Right ventricle myocardium inferior (tissue), 1 donor: ENCODE measurements at regions of chr1 and their contacts with region 1.

Region 1: DNA sequence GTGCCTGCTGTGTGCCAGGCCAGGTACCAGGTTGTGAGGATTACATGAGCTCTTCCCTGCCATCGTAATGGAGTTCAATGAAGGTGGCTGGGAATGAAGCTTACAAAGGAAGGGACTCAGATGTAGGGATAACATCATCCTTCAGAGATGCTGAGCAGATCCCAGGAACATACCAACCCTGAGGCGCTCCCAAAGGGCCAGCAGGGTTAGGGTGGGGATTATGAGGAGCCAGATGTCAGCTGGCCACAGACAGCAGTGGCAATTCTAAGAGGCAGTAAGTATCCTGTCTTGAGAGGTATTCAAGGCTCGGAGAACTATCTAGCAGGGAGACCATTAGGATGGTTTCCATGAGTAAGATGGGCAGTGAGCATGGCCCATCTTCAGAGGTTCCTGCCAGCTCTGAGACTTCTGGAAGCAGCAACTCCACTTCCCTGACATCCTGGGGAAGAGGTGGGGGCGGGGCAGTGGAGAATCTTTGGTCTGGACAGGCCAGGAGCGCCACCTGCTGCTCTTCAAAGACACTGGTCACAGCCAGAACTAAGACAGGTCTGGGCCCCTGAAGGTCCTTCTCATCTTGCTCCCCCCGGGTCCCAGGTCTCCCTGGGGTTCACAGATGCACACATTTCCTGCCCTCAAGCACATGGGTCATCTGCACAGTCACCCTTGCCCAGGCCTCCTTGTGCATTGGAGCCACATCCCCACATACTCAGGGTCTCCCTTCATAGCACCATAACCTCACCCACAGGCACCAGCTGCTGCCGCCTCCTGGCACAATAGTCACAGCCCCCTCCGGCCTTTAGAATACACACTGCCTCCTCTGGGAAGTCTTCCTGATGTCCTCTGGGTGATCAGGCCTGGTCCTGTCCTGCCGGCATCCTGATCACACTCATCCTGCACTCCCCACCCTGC is 2.7 kb upstream of the SDC3 start:
- DNase-seq: peak; percentile 93
- ATAC-seq: peak; percentile 81

Region 2: DNA sequence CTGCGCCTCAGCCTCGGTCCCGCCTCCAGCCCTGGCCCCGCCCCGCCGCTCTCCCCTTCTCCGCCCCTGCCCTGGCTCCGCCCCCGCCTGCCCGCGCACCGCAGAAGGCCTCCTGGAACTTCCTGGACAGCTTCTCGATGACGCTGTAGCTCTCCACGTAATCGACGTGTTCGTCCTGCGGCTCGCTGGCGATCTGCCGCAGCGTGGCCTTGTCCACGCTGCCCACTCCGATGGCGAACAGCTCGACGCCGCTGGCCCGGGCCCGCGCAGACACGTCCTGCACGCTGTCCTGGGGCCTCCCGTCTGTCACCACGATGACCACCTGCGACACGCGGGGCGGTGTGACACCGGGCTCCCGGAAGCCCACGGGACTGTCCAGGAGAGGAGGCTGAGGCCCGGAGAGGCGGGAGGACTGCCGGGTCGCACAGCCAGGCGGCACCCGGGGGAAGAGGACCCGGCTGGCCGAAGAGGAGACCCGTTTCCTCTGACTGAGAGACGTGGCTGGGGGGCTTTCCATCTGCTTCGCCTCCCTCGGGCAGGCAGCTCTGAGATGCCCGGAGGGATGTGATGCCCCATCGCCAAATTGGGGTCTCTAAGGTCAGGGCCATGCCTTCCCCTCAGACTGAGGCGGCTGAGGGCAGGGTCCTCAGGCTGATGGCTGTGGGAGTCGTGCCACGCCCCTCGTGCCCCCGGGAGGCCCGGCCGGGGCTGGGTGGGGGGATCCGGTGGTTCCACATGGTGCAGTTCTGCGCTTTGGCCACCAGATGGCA is 192.5 kb before region 1 on chr1:
- intact Hi-C with region 1: loop called (anchors 1 kb)
- DNase-seq: peak; percentile 90
- ATAC-seq: peak; percentile 89

Region 3: DNA sequence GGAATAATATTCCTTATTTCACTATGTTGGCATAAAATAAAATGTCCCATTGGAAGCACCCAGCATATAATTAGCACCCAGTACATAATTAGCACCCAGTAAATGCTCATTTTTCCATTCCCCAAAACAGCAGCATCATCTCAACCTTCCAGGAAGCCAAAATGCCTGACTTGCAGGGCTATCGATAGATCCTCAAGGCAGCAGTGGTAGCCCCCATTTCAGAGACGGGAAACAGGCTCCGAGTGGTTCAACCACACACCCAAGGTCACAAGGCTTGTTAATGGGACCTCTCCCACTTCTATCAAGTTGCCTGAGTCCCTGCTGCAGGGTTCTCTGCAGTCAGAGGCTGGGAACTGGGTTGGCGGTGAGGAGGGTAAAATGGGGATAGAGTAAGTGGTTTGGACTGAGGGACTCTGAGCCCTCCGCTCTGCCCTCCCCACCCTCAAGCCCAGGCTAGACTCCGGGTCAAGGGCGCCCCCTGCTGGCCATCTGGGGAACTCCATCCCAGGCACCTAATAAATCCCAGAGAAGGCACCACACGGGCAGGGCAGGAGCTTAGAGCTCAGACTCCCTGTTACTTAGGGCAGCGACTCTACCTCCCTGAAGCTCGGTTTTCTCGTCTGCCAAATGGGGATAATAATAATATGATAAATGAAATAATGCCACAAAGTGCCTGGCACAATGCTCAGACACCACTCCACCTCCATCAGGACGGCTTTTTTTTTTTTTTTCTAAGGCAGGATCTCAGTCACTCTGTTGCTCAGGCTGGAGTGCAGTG is 131.8 kb before region 1 on chr1:
- intact Hi-C with region 1: loop called (anchors 1 kb)
- DNase-seq: peak; percentile 92
- ATAC-seq: peak; percentile 66

Region 4: GRCh38 chr1:30801771-30802198 is 109.5 kb before region 1 on chr1:
- intact Hi-C with region 1: loop called (anchors 1 kb)
- DNase-seq: peak; percentile 91
- ATAC-seq: peak; percentile 60

Region 5: GRCh38 chr1:30852026-30852425 is 59.3 kb before region 1 on chr1:
- intact Hi-C with region 1: loop called (anchors 5 kb)
- DNase-seq: peak; percentile 75
- ATAC-seq: peak; percentile 66